K562 (cell line): ENCODE measurements at regions of chr6 and their contacts with region 1.

Region 1: DNA sequence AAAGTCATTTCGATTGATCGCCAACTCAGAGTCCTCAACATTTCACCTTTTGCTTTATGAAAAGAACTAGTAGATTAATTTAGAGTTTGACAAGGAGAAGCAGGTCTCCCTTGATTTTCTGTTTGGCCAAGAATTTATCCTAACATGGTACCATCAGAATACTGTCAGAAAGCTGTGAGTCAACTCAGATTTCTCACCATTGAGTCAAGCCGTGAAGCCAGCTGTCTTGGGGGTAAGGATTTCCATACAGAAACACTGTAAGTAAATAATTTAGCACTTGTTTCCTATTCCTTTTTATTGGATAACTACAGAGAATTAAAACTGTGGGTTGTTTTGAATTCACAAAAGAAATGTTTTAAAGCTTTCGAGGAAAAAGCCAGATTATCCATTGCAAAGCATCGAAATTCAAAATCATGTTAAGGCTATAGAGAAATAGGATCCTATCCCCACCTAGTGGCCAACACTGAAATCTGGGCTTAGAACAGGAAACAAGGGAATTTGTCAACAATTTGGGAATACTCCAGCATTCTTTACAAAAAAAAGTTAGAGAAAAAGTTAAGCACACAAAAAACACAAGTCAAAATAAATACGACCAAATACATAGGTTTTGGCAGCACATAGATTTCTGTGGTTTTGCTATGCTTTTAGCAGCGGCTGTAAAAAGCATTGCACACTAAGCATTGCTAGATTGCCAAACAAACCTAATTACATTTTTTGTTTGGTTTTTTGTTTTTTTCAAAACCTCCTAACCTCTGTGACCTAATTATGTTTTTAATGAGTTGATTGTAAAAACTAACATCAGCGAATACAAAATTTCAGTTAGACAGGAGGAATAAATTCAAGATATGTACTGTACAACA is 44.2 kb downstream of the COL11A2 start:
- DNase-seq: peak in 3 of 4 experiments; percentile 38 to 49 (median 48)
- ATAC-seq: peak; percentile 79
- H3K4me3 ChIP-seq: no peak overlapping the region
- H3K27ac ChIP-seq: no peak overlapping the region
- H3K4me1 ChIP-seq: no peaks in the 10 kb centered on the region
- H3K27me3 ChIP-seq: peaks cover 4 to 9% of the 10 kb centered on the region in 2 experiments; a peak in 4 of 5 replicates
- CTCF ChIP-seq: peak; percentile 65 to 87 (median 83); a peak in 5 of 6 replicates
- EP300 ChIP-seq: no peak
- POLR2A ChIP-seq: no peak
- RAD21 ChIP-seq: peak; percentile 72 to 87

Region 2: DNA sequence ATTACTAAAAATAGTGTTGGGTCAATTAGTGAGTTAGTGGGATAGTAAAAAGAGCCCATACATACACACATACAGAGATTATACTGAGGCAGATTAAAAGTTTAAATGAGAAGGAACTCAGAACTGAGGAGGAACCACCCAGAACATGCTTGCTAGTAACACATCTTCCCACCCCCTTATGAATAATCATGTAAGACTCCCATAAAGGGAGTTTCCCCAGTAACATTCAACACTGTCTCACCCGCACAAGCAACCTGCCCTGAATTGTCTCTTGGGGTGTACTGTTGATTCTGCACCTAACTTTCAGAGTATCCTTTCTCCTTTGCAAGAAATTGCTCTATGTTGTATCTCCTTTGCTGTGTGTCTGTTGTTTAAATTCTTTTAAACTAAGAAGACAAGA is 373.6 kb before region 1 on chr6:
- CTCF ChIA-PET with region 1: no interaction called
- POLR2A ChIA-PET with region 1: no interaction called
- in situ Hi-C with region 1: no loop called
- intact Hi-C with region 1: no loop called
- DNase-seq: no peak
- ATAC-seq: no peak
- H3K4me3 ChIP-seq: no peak overlapping the region
- H3K27ac ChIP-seq: no peak overlapping the region
- H3K4me1 ChIP-seq: no peaks in the 10 kb centered on the region
- H3K27me3 ChIP-seq: peaks cover 4 to 11% of the 10 kb centered on the region in 2 experiments; a peak in 3 of 5 replicates
- CTCF ChIP-seq: no peak
- EP300 ChIP-seq: no peak
- POLR2A ChIP-seq: no peak
- RAD21 ChIP-seq: no peak

Region 3: DNA sequence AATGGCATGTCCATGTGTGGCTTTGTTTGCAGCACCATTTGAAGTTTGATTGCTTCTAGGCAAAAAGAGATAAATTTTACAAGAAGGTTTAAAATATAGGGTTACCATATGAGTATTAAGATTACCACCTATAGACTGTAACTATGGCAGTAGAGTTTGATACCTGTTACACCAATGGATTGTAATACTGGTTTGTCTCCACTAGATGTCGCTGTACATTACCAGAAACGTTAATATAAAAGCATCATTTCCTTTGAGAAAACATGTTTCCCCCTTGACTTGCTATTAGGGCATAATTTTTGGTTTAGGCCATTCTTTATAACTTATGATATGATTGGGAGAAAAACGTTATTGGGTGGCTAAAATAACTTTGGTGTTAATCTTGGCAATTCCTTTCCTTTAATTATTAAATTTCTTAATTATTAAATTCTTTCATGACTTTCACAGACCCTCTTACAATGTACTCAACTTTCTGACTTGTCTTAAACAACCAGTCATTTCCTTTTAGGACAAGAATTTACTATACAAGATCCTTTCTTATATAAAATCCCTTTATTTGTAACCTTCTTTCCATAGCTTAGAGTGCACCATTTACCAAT is 29.4 kb before region 1 on chr6:
- CTCF ChIA-PET with region 1: interaction called, 31 read pairs
- POLR2A ChIA-PET with region 1: no interaction called
- in situ Hi-C with region 1: no loop called
- intact Hi-C with region 1: loop called (anchors 1 kb)
- DNase-seq: peak; percentile 56 to 72 (median 60)
- ATAC-seq: peak; percentile 63; the same call in 2 of the 3 replicates
- H3K4me3 ChIP-seq: no peak overlapping the region
- H3K27ac ChIP-seq: no peak overlapping the region
- H3K4me1 ChIP-seq: peaks cover 0 to 6% of the 10 kb centered on the region in 2 experiments; a peak in 1 of 5 replicates
- H3K27me3 ChIP-seq: peaks cover 16 to 28% of the 10 kb centered on the region in 2 experiments
- CTCF ChIP-seq: peak; percentile 59 to 86 (median 63); a peak in 5 of 6 replicates
- EP300 ChIP-seq: no peak
- POLR2A ChIP-seq: no peak
- RAD21 ChIP-seq: peak; percentile 68 to 79

Region 4: GRCh38 chr6:33126101-33126714 is 21.8 kb before region 1 on chr6:
- CTCF ChIA-PET with region 1: interaction called, 26 read pairs
- POLR2A ChIA-PET with region 1: no interaction called
- in situ Hi-C with region 1: no loop called
- intact Hi-C with region 1: loop called (anchors 1 kb)
- DNase-seq: peak; percentile 75 to 79 (median 77)
- ATAC-seq: peak; percentile 91
- H3K4me3 ChIP-seq: no peak overlapping the region
- H3K27ac ChIP-seq: no peak overlapping the region
- H3K4me1 ChIP-seq: no peaks in the 10 kb centered on the region
- H3K27me3 ChIP-seq: peaks cover 5 to 26% of the 10 kb centered on the region in 2 experiments; a peak in 3 of 5 replicates
- CTCF ChIP-seq: peak; percentile 74 to 90 (median 79)
- EP300 ChIP-seq: no peak
- POLR2A ChIP-seq: no peak
- RAD21 ChIP-seq: peak in 1 of 2 experiments; percentile 41; a peak in 2 of 4 replicates